ENCODE measurements at regions of chr15 and their contacts with region 1.

Region 1: DNA sequence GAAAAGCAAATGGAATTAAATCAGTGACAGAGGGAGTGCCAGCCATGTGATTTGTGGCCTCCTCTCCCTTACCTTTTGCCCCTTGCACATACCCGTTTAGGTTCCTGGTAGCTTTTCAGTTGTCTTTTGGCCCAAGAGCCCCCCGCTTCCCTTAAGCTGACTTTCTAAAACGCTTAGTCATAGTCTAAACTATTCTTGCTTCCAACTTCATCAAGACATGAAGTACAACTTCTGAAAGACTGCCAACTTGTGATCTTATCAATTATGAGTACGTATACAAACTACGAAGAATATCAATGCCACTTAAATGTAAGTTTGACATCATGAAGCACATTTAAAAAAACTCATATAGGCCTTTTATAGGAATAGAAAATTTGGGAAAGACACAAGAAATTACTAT is 61.9 kb downstream of the EIF3J start:
- DNase-seq: peak; percentile 31
- H3K4me3 ChIP-seq: no peak overlapping the region
- H3K27ac ChIP-seq: no peak overlapping the region
- H3K4me1 ChIP-seq: no peaks in the 10 kb centered on the region
- H3K27me3 ChIP-seq: no peaks in the 10 kb centered on the region
- CTCF ChIP-seq: no peak

Region 2: DNA sequence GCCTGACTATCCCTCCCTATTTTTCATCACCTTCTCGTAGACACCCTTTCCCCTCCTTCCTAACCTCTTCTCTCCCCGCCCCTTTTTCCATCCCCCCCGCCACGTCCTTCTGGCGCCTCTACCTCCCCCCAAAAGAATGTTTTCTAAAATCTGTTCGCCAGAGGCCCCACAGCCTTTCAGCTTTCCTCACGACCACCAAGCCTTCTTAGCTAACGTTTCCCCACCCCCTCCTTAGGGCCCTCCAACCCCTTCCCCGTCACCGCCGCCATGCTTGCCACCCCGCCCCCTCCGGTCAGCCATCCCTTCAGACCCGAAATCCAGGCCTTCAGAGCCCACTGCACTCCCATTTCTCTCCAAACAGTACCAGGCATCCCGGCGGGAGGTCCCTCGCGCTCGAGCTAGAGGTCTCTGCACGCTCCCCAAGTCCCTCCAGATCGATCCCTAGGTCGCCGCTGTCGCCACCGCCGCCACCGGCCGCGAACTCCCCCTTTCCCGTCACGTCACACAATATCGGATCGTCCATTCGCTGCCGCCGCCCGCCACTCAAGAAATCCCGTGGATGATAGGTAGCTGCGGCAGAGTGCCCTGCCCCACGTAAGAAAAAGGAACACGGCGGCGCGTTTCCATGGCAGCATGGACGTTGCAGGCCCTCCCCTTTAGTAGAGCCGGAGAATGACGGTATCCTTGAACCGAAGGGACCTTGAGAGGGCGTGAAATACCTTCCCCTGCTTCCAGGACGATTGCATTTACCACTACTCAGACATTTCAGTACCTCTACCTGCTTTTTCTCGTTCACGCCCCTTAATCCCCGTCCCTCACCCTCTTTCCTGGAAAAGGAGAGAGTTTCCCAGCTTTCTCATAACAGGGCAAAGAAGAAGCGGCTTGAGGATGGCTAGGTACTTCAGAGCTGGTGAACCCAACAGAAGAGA is 1106.0 kb before region 1 on chr15 and contains the start of gene TP53BP1:
- CTCF ChIA-PET with region 1: no interaction called
- POLR2A ChIA-PET with region 1: no interaction called
- intact Hi-C with region 1: no loop called
- DNase-seq: peak; percentile 98
- H3K4me3 ChIP-seq: peak within 1 kb of the TSS; percentile 93
- H3K27ac ChIP-seq: peak within 1 kb of the TSS; percentile 85
- H3K4me1 ChIP-seq: peaks cover 15% of the 10 kb centered on the region
- H3K27me3 ChIP-seq: no peaks in the 10 kb centered on the region
- CTCF ChIP-seq: no peak
- total RNA-seq, gene TP53BP1: 66.0 and 74.5 TPM in 2 replicates

Region 3: DNA sequence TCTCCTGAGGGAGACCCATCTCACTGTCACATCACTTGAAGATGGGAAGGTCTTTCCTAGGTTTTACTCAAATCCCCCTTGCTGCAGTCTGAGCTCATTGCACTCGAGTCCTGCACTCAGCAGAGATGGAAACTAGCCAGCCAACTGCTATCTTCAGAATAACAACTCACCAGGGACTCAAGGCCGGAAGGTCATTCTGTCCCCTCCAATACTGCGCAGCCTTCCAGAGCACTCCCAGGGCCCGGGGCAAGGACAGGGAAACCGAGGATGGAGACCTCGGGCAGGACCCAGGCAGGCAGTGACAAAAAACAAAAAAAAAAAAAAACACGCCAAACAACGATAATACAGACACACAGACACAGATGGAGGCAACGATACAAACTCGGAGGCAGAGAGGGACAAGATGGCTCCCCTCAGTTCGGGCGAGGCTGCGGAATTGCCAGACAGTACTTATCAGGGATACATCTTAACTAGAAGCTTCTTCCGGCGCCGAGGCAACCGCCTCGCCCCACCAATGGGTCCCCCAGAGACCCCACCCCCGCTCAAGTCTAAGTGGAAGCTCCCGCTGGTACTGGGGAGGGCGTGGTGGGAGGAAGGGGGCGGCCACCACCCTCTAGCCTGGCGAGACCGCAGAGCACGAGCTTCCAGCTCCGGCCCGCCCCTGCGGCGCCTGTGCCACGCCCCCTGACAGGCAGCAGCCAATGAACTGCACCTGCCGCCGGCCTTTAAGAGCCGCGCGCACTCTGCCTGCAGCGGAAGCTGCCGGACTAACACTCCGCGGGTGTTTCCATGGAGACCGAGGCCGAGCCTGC is 1088.5 kb before region 1 on chr15:
- CTCF ChIA-PET with region 1: no interaction called
- POLR2A ChIA-PET with region 1: no interaction called
- intact Hi-C with region 1: no loop called
- DNase-seq: peak; percentile 100
- H3K4me3 ChIP-seq: peak overlapping the region; percentile 49
- H3K27ac ChIP-seq: peak overlapping the region; percentile 71
- H3K4me1 ChIP-seq: peaks cover 43% of the 10 kb centered on the region
- H3K27me3 ChIP-seq: no peaks in the 10 kb centered on the region
- CTCF ChIP-seq: 0 out of 2 replicates have a peak, but pooled peaks have one; percentile 24

Region 4: DNA sequence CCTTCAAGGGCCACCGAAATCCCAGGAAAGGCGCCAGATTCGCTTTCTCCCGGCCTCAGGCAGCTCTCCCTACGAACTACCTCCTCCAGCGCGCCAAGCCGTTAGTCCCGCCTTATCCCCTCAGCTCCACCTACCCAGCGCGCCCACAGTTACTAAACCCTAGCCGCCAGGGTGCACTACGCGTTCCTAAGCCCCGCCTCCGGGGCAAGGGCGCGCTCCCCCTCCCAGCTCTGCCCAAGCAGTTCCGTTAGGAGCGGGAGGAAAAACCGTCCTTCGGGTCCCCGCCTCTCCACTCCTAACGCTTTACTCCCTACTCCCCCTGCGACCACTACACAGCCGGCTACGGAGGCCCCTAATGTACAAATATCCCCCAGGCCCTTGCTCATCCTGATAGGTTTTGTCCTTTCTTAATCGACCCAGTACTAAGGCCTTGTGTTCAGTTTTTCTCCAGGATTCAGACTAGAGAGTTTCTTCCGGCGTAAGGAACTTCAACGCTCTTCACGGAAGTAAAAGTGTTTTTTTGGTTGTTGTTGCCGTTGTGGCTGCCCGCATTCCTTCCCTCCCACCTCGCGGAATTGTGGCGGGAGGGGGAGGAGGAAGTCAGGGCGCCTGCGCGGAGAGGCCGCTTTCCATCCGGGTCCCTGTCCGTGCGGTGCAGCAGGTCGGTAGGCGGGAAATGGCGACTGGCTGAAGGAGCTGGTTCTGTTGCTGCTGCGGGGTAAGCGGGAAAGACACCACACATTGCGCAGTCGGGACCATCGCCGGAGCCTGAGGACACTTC is 171.7 kb before region 1 on chr15 and contains the start of gene CTDSPL2:
- CTCF ChIA-PET with region 1: no interaction called
- POLR2A ChIA-PET with region 1: no interaction called
- intact Hi-C with region 1: no loop called
- DNase-seq: peak; percentile 100
- H3K4me3 ChIP-seq: peak within 1 kb of the TSS; percentile 93
- H3K27ac ChIP-seq: peak within 1 kb of the TSS; percentile 98
- H3K4me1 ChIP-seq: peaks cover 3% of the 10 kb centered on the region
- H3K27me3 ChIP-seq: no peaks in the 10 kb centered on the region
- CTCF ChIP-seq: peak; percentile 53
- total RNA-seq, gene CTDSPL2: 98.6 and 99.7 TPM in 2 replicates

Region 5: GRCh38 chr15:44663409-44664308 is 64.8 kb after region 1 on chr15 and contains the start of gene SPG11:
- CTCF ChIA-PET with region 1: no interaction called
- POLR2A ChIA-PET with region 1: no interaction called
- intact Hi-C with region 1: loop called (anchors 5 kb)
- DNase-seq: peak; percentile 98
- H3K4me3 ChIP-seq: peak within 1 kb of the TSS; percentile 71
- H3K27ac ChIP-seq: peak within 1 kb of the TSS; percentile 90
- H3K4me1 ChIP-seq: peaks cover 11% of the 10 kb centered on the region
- H3K27me3 ChIP-seq: no peaks in the 10 kb centered on the region
- CTCF ChIP-seq: peak; percentile 91
- total RNA-seq, gene SPG11: 55.4 and 68.5 TPM in 2 replicates

Region 6: GRCh38 chr15:44698641-44699040 is 99.7 kb after region 1 on chr15:
- CTCF ChIA-PET with region 1: no interaction called
- POLR2A ChIA-PET with region 1: no interaction called
- intact Hi-C with region 1: no loop called
- DNase-seq: no peak
- H3K4me3 ChIP-seq: no peak overlapping the region
- H3K27ac ChIP-seq: no peak overlapping the region
- H3K4me1 ChIP-seq: no peaks in the 10 kb centered on the region
- H3K27me3 ChIP-seq: no peaks in the 10 kb centered on the region
- CTCF ChIP-seq: no peak

Measured in A673 (cell line).